Esophagus muscularis mucosa (tissue), 4 donors: ENCODE measurements at regions of chr20 and their contacts with region 1.

Region 1: GRCh38 chr20:50625986-50626677 is 65.2 kb downstream of the RIPOR3 start:
- DNase-seq: no peak
- H3K4me3 ChIP-seq: no peak overlapping the region
- H3K27ac ChIP-seq: peak overlapping the region; percentile 35 to 57 (median 37)
- H3K4me1 ChIP-seq: peaks cover 10 to 16% (median 14%) of the 10 kb centered on the region in 4 donors
- H3K27me3 ChIP-seq: no peaks in the 10 kb centered on the region
- CTCF ChIP-seq: peak; percentile 69 to 80 (median 70)
- EP300 ChIP-seq: no peak
- POLR2A ChIP-seq: no peak

Region 2: DNA sequence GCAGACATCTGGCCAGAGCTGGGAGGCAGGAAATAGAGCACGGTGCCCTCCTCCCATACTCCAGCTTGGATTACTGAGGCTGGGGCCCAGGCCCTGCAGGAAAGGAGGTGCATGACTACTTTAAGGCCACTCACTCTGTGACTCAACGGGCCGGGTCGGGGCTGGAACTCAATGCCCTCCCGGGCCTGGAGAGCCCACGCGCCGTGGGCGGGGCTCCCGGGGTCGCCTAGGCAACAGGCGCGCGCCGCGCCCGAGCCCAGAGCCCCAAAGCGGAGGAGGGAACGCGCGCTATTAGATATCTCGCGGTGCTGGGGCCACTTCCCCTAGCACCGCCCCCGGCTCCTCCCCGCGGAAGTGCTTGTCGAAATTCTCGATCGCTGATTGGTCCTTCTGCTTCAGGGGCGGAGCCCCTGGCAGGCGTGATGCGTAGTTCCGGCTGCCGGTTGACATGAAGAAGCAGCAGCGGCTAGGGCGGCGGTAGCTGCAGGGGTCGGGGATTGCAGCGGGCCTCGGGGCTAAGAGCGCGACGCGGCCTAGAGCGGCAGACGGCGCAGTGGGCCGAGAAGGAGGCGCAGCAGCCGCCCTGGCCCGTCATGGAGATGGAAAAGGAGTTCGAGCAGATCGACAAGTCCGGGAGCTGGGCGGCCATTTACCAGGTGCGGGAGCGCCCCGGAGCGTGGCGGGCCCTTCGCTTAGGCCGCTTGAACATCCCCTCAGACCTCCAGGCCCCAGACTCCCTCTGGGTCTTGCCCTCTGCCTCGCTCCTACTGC is 116.0 kb before region 1 on chr20 and contains the start of gene PTPN1:
- intact Hi-C with region 1: no loop called
- DNase-seq: peak; percentile 100
- H3K4me3 ChIP-seq: peak within 1 kb of the TSS; percentile 72 to 94 (median 82)
- H3K27ac ChIP-seq: peak within 1 kb of the TSS; percentile 82 to 90 (median 87)
- H3K4me1 ChIP-seq: peaks cover 29 to 53% (median 50%) of the 10 kb centered on the region in 4 donors
- H3K27me3 ChIP-seq: no peaks in the 10 kb centered on the region
- CTCF ChIP-seq: peak in 1 of 3 experiments; percentile 11
- EP300 ChIP-seq: no peak
- POLR2A ChIP-seq: peak; percentile 97
- total RNA-seq, gene PTPN1: 21.2 to 49.0 (median 41.0) TPM

Region 3: DNA sequence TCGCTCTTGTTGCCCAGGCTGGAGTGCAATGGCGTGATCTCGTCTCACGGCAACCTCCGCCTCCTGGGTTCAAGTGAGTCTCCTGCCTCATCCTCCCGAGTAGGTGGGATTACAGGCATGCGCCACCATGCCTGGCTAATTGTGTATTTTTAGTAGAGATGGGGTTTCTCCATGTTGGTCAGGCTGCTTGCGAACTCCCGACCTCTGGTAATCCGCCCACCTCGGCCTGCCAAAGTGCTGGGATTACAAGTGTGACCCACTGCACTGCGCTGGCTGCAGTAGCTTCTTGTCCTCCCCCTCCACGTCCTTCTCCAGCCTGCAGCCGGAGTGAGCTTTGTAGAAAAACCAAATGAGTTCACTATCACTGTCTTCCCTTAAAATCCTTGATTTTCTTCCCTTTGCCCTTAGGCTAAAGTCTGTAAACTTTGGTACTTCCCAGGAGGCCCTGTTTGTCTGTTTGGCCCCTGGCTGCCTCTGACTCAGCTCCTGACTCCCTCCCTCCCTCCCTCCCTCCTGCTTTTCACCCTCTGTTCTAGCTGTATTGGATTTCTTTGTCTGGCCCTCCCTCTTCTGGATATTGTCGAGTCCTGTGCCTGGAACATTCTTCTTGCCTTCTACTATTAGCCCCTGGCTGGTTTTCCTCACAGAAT is 118.1 kb after region 1 on chr20:
- intact Hi-C with region 1: loop called (anchors 2 kb)
- DNase-seq: no peak
- H3K4me3 ChIP-seq: peak overlapping the region in 2 of 4 donors; percentile 1
- H3K27ac ChIP-seq: peak overlapping the region; percentile 76 to 85 (median 82)
- H3K4me1 ChIP-seq: peaks cover 25 to 51% (median 37%) of the 10 kb centered on the region in 4 donors
- H3K27me3 ChIP-seq: no peaks in the 10 kb centered on the region
- CTCF ChIP-seq: peak; percentile 55 to 57 (median 55)
- EP300 ChIP-seq: no peak
- POLR2A ChIP-seq: no peak